Dendritic cell treated with granulocyte-macrophage colony-stimulating factor and Interleukin-4, amounts not matched to agents 40 ng/mL and 50 ng/mL, for 4 days (primary cell): ENCODE measurements at regions of chr9 and their contacts with region 1.

Region 1: DNA sequence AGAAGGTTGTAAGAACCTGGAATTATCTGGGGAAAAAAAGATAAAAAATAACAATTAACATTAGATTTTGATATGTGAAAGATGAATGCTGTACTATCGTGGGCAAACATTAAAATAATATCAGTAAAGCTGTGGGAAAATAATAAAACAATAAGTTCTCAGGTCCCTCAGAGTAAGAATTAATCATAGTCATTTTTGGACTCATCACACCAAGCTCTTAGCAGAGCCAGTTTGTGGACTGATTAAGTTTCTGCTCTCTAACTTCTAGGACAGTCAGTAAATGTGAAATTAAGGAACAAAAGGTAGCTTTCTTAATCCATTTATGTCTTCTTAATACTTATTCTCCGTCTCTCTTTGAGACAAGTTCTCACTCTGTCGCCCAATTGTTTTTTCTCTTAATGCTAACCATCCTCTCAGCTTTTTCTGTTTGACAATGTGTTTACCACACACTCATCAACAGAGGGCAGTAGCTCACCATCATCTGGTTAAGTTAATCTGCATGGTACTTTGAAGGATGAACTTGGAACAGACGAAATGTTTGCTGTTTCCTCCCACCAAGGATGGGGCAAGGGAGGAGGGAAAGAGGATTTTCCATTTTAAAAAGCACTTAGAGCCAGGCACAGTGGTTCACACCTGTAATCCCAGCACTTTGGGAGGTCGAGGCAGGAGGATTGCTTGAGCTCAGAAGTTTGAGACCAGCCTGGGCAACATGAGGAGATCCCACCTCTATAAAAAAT is 5.3 kb upstream of the ACO1 start:
- H3K4me3 Mint-ChIP-seq: no peak overlapping the region
- H3K27ac Mint-ChIP-seq: no peak overlapping the region
- H3K4me1 Mint-ChIP-seq: peaks cover 14% of the 10 kb centered on the region
- H3K27me3 Mint-ChIP-seq: peaks cover 31% of the 10 kb centered on the region

Region 2: GRCh38 chr9:32431940-32432555 is 52.9 kb after region 1 on chr9:
- intact Hi-C with region 1: loop called (anchors 2 kb)
- H3K4me3 Mint-ChIP-seq: no peak overlapping the region
- H3K27ac Mint-ChIP-seq: no peak overlapping the region
- H3K4me1 Mint-ChIP-seq: peaks cover 5% of the 10 kb centered on the region
- H3K27me3 Mint-ChIP-seq: no peaks in the 10 kb centered on the region

Region 3: GRCh38 chr9:32579706-32580331 is 200.7 kb after region 1 on chr9:
- intact Hi-C with region 1: loop called (anchors 1 kb)
- H3K4me3 Mint-ChIP-seq: no peak overlapping the region
- H3K27ac Mint-ChIP-seq: no peak overlapping the region
- H3K4me1 Mint-ChIP-seq: no peaks in the 10 kb centered on the region
- H3K27me3 Mint-ChIP-seq: peaks cover 37% of the 10 kb centered on the region

Region 4: GRCh38 chr9:32968101-32969011 is 589.2 kb after region 1 on chr9:
- intact Hi-C with region 1: loop called (anchors 2 kb)
- H3K4me3 Mint-ChIP-seq: no peak overlapping the region
- H3K27ac Mint-ChIP-seq: no peak overlapping the region
- H3K4me1 Mint-ChIP-seq: no peaks in the 10 kb centered on the region
- H3K27me3 Mint-ChIP-seq: no peaks in the 10 kb centered on the region